Activated naive CD4-positive, alpha-beta T cell treated with anti-CD3 and anti-CD28 coated beads for 36 hours (primary cell): ENCODE measurements at regions of chr19 and their contacts with region 1.

Region 1: DNA sequence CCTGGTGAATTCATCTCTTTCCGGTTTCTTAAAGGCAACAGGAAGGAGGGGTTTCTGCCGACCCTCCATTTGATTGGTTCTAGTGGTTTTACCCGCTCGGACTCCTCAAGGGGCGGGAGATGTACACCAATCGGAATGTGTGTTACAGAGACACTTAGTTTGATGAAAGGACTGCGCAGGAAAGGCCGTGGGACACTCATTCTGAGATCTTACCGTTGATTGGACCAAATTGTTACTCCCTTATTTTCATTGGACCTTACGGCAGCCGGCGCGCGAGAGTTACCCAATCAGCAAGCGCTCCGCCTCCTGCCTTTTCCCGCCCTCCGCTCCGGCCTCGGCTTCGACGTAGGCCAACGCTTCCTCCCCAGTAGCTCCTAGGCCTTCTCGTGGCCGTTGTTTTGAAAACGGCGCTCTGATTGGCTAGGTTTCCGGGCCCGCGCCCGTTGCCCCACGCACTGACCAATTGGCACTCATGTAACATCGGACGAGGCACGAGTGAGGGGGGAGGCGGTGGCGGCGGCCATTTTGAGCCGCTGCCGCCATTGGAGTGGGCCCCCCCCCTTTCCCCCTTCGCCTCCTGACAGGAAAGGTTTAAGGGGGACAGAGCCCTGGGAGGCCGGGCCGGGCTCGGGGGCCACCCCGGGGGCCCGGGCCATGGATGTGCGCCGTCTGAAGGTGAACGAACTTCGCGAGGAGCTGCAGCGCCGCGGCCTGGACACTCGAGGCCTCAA is at the start of gene HNRNPUL1:
- DNase-seq: peak; percentile 99
- H3K4me3 Mint-ChIP-seq: peak within 1 kb of the TSS; percentile 91
- H3K27ac Mint-ChIP-seq: peak within 1 kb of the TSS; percentile 99
- H3K4me1 Mint-ChIP-seq: peaks cover 28% of the 10 kb centered on the region
- H3K27me3 Mint-ChIP-seq: no peaks in the 10 kb centered on the region
- total RNA-seq, gene HNRNPUL1: 298 to 301 TPM

Region 2: DNA sequence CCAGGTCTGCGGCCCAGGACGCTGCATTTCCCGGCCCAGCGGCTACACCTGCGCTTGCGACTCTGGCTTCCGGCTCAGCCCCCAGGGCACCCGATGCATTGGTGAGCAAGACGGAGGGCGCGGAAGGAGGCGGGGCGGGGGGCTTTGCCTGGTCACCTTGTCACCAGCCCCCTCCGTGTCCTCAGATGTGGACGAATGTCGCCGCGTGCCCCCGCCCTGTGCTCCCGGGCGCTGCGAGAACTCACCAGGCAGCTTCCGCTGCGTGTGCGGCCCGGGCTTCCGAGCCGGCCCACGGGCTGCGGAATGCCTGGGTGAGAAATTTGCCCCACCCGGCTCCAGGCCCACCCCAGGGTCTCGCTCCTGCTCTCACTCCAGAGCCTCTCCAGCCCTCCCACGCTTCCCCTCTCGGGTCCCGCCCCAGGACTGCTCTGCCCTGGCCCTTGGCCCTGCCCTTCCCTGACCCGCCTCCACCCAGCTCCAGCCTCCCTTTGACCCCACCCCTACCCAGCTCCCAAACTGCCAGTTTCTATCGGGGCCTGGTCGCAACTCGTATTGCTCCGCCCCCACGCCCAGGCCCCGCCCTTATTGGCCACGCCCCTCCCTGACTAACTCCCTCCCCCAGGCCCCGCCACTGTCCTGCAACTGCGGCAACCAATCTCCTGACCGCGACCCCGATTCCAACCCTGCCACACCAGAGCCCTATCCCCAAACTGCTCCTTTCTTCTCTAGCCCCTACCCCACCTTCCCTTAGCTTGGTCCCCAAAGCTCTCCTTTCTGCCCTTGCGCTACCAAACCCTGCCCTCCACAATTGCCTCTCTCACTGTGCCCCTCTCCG is 654.2 kb before region 1 on chr19:
- CTCF ChIA-PET with region 1: no interaction called
- intact Hi-C with region 1: loop called (anchors 2 kb)
- DNase-seq: peak; percentile 97
- H3K4me3 Mint-ChIP-seq: peak overlapping the region; percentile 89
- H3K27ac Mint-ChIP-seq: peak overlapping the region; percentile 91
- H3K4me1 Mint-ChIP-seq: peaks cover 67% of the 10 kb centered on the region
- H3K27me3 Mint-ChIP-seq: no peaks in the 10 kb centered on the region

Region 3: DNA sequence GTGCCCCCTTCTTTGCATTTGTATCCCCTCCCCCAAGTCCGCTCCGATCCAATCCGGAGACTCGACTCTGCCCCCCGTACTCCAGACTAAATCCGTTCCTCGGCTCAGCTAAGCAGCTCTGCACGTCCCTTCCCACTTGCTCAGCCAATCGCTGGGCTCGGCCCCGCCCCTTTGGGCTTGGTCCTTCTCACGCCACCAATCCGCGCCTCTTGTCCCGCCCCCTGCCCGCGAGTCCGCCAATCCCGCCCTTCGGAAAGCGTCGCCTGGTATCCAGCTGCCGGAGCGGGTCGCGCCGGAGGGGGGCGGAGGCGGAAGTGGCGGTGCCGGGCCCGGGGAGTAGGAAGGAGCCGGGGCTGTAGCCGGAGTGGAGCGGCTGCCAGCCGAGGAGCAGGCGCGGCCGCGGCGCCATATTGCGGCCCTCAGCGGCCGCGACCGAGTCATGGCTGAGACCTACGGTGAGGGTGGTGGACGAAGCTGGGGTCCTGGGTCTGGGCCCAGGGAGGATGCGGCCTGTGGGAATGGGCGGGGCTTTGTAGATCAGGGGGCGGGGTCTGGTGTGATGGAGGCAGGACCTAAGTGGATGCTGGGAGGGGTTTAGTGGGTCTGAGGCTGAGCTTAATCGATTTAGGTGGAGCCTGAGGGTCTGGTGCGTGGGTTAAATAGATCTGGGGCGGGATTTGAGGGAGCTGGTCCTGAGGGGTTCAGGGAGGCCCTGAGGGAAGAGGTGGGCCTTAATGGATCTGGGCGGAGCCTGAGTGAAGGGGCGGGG is 485.9 kb before region 1 on chr19 and contains the start of gene RAB4B:
- CTCF ChIA-PET with region 1: no interaction called
- intact Hi-C with region 1: loop called (anchors 1 kb)
- DNase-seq: peak; percentile 100
- H3K4me3 Mint-ChIP-seq: peak within 1 kb of the TSS; percentile 85
- H3K27ac Mint-ChIP-seq: peak within 1 kb of the TSS; percentile 91
- H3K4me1 Mint-ChIP-seq: peaks cover 39% of the 10 kb centered on the region
- H3K27me3 Mint-ChIP-seq: no peaks in the 10 kb centered on the region
- total RNA-seq, gene RAB4B: 40.0 to 40.3 TPM

Region 4: DNA sequence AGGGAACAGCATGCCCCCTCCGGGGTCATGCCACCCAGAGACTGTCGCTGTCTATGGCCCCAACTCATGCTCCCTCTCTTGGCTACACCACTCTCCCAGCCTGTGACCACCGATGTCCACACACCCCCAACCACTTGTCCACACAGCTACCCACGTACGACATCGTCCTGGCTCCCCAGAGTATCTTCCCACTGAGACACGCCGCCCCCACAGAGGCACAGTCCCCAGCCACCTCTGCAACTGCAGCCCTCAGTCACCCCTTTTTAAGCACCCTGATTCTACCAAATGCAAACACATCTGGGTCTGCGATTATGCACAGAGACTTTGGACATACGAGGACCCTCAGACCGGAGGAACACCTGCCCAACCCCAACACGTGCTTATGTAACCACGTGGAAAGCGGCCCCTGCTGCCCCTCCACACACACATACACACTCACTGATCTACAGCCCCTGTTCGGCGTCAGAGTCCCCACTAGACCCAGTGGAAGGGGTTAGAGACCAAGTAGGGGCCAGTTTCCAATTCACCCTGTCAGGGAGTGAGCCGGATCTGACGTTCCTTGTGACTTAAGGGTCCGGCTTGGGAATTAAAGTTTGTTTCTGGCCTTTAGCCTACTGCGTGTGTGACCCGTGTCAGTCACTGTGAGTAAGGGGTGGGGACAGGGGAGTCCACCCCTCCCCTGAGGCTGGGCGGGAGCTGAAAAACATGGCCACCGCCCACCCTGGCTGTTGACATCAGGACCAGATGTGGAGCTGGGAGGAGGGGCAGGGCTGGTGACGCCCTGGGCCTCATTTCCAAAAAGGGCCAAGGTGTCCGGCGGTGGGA is 56.9 kb before region 1 on chr19:
- CTCF ChIA-PET with region 1: interaction called, 118 read pairs
- intact Hi-C with region 1: loop called (anchors 1 kb)
- DNase-seq: no peak
- H3K4me3 Mint-ChIP-seq: no peak overlapping the region
- H3K27ac Mint-ChIP-seq: no peak overlapping the region
- H3K4me1 Mint-ChIP-seq: peaks cover 4% of the 10 kb centered on the region
- H3K27me3 Mint-ChIP-seq: no peaks in the 10 kb centered on the region

Region 5: DNA sequence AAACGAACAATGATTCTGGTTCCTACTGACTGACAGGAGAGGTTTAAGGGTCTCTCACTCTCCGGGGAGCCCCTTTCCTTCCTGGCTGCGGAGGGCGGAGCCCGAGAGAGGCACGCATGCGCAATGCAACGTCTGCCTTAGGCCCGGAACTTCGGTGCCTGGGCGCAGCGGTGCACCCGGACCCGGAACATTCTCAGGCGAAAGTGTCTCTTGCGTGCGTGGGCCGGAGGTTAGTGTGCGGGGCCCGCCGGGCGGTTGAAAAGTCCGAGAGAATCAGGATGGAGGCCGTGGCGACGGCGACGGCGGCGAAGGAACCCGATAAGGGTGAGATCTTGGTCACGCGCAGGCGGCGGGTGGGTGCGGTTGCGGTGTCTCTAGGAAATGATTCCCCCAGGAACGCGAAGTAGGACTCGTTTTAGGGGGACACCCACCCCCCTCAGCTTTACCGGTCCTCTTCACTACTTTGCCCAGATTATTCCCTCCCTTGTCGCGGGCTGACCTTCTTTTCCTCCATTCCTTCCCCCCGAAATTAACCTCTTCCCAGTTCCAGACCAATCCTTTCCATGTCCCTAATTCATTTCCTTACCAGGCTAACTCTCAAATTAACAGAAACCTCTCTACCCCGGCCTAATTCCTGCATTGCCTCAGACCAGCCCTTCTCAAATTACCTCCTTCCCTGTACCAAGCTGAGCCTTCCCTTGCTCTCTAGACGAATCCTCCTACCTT is 46.2 kb after region 1 on chr19 and contains the start of gene CCDC97:
- CTCF ChIA-PET with region 1: interaction called, 32 read pairs
- intact Hi-C with region 1: loop called (anchors 1 kb)
- DNase-seq: peak; percentile 90
- H3K4me3 Mint-ChIP-seq: peak within 1 kb of the TSS; percentile 95
- H3K27ac Mint-ChIP-seq: peak within 1 kb of the TSS; percentile 96
- H3K4me1 Mint-ChIP-seq: peaks cover 70% of the 10 kb centered on the region
- H3K27me3 Mint-ChIP-seq: no peaks in the 10 kb centered on the region
- total RNA-seq, gene CCDC97: 14.9 to 15.8 TPM

Region 6: GRCh38 chr19:41363753-41364523 is 99.9 kb after region 1 on chr19 and contains the start of gene B9D2:
- CTCF ChIA-PET with region 1: interaction called, 3 read pairs
- intact Hi-C with region 1: loop called (anchors 1 kb)
- DNase-seq: peak; percentile 99
- H3K4me3 Mint-ChIP-seq: peak within 1 kb of the TSS; percentile 97
- H3K27ac Mint-ChIP-seq: peak within 1 kb of the TSS; percentile 97
- H3K4me1 Mint-ChIP-seq: peaks cover 30% of the 10 kb centered on the region
- H3K27me3 Mint-ChIP-seq: no peaks in the 10 kb centered on the region
- total RNA-seq, gene B9D2: 3.5 to 4.1 TPM

Region 7: DNA sequence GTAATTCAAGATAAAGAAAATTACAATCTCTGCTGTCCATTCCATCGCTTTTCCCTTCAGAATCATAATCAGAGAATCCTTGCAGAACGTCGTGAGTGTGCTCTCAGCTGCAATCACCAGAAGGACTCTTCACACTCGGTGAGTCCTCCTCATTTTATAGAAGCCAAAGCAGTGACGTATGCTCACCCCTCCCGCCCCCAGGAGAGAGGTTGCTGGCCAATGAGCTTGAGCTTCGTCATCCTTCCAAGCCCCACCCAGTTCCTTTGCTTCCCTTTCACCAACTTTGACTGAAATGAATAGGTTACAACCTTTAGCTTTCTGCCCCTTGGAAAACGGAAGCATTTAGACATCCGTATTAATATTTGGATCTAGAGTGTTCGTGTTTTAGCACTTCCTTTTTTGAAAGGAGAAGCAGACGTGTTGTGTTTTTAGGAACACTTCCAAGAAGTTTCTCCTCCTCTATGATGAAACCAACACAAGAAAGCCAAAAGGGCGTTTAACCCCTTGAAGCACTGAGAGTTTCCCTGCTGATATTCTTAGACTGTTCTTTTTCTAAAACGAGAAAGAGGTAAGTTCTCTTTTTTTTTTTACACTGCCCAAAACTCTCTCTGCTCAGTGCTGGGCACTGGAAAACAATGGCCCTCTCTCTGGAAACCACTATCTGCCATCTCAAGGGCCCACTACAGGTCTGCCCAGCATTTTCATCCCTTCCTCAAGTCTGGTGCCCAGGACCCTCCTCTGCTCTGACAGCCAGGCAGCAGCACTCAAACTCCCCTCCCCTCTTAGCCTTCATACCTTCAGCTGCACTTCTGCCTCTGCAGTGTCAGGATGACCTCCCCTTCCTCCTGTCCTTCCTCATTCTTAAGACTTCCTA is 267.7 kb after region 1 on chr19:
- CTCF ChIA-PET with region 1: interaction called, 3 read pairs
- intact Hi-C with region 1: loop called (anchors 5 kb)
- DNase-seq: peak; percentile 95
- H3K4me3 Mint-ChIP-seq: peak overlapping the region; percentile 78
- H3K27ac Mint-ChIP-seq: peak overlapping the region; percentile 90
- H3K4me1 Mint-ChIP-seq: peaks cover 52% of the 10 kb centered on the region
- H3K27me3 Mint-ChIP-seq: no peaks in the 10 kb centered on the region